Ascending aorta (tissue), 2 donors: ENCODE measurements at regions of chr4 and their contacts with region 1.

Region 1: GRCh38 chr4:163111593-163111992 is 55.1 kb downstream of the NAF1 start:
- DNase-seq: no peak
- H3K4me3 ChIP-seq: no peak overlapping the region
- H3K27ac ChIP-seq: no peak overlapping the region
- H3K4me1 ChIP-seq: no peaks in the 10 kb centered on the region
- H3K27me3 ChIP-seq: no peaks in the 10 kb centered on the region
- CTCF ChIP-seq: peak in 1 of 3 experiments; percentile 28

Region 2: GRCh38 chr4:163048447-163048846 is 63.1 kb before region 1 on chr4:
- intact Hi-C with region 1: loop called (anchors 2 kb)
- DNase-seq: no peak
- H3K4me3 ChIP-seq: no peak overlapping the region
- H3K27ac ChIP-seq: no peak overlapping the region
- H3K4me1 ChIP-seq: peaks cover 0 to 9% of the 10 kb centered on the region in 2 donors
- H3K27me3 ChIP-seq: no peaks in the 10 kb centered on the region
- CTCF ChIP-seq: peak in 1 of 3 experiments; percentile 35